ENCODE measurements at regions of chr18 and their contacts with region 1.

Region 1: GRCh38 chr18:79042276-79042675 is 26.9 kb upstream of the ATP9B start:
- DNase-seq: no peak
- H3K4me3 ChIP-seq: no peak overlapping the region
- H3K27ac ChIP-seq: no peak overlapping the region
- H3K4me1 ChIP-seq: no peaks in the 10 kb centered on the region
- H3K27me3 ChIP-seq: no peaks in the 10 kb centered on the region
- CTCF ChIP-seq: no peak

Region 2: GRCh38 chr18:78480262-78481054 is 561.8 kb before region 1 on chr18:
- CTCF ChIA-PET with region 1: no interaction called
- dilution Hi-C with region 1: no loop called
- in situ Hi-C with region 1: no loop called
- intact Hi-C with region 1: no loop called
- DNase-seq: no peak
- H3K4me3 ChIP-seq: no peak overlapping the region
- H3K27ac ChIP-seq: no peak overlapping the region
- H3K4me1 ChIP-seq: no peaks in the 10 kb centered on the region
- H3K27me3 ChIP-seq: no peaks in the 10 kb centered on the region
- CTCF ChIP-seq: no peak

Region 3: DNA sequence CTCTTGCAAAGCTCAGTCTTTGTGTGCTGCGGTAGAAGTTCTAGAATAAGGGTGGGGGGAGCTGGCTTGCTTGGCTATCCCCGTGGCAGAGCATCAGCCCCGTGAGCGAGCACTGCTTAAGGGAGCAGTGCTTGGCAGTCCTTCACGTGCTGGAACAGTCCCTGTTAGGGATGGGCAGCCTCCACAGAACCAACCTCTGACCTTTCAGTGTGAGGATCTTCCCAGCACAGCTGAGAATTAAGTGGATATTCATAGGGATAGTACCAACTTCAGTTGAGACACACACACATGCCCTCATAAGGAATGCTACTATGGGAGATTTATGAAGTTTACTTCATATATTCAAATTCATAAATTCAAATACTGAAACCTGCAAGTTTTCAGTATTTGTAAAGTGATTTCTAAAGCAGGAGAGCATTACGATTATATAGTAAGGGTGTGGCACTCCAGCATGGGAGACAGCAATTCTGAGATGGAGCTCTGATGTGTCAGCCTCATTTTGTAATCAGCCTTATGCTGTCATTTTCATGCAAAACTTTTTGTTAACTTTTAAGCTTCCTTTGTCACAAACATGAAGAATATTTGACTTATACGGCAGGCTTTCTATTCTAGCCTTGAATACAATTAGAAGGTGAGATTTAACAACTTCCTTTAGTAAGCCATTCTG is 66.4 kb after region 1 on chr18:
- CTCF ChIA-PET with region 1: no interaction called
- dilution Hi-C with region 1: loop called (anchors 5 kb)
- in situ Hi-C with region 1: no loop called
- intact Hi-C with region 1: no loop called
- DNase-seq: no peak
- H3K4me3 ChIP-seq: no peak overlapping the region
- H3K27ac ChIP-seq: no peak overlapping the region
- H3K4me1 ChIP-seq: no peaks in the 10 kb centered on the region
- H3K27me3 ChIP-seq: no peaks in the 10 kb centered on the region
- CTCF ChIP-seq: no peak